MCF 10A (cell line): ENCODE measurements at regions of chr13 and their contacts with region 1.

Region 1: DNA sequence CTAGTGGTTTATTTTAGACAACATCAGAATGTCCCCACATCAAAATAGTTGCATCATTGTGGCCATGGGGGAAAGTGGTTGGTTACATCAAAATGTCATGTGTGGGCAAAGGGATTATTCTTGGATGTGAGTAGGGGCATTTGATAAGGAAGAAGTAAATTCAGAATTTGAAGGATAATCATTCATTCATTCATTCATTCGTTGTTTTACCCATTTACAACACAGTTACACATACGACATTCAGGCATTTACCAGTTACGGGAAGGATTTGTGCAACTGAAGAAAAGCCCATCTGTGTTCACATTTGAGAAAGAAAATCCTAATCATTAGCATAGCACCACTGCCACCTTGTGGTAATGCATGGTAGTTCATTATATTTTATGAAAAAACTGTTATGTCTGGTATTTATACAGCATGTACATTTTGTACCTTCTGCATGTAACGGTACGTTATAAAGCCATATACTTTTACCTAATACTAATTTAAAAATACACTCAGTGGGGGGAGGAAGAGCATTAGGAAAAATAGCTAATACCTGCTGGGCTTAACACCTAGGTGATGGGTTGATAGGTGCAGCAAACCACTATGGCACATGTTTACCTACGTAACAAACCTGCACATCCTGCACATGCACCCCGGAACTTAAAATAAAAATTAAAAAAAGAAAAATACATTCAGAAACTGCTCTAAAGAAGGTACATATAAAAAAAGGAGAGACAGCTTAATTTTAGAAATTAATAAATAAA is 62.1 kb downstream of the DGKH start:
- DNase-seq: peak; percentile 82
- H3K4me3 Mint-ChIP-seq: no peak overlapping the region
- H3K27ac Mint-ChIP-seq: peak overlapping the region; percentile 25
- H3K4me1 Mint-ChIP-seq: peaks cover 26% of the 10 kb centered on the region
- H3K27me3 Mint-ChIP-seq: no peaks in the 10 kb centered on the region
- CTCF ChIP-seq: peak; percentile 60

Region 2: DNA sequence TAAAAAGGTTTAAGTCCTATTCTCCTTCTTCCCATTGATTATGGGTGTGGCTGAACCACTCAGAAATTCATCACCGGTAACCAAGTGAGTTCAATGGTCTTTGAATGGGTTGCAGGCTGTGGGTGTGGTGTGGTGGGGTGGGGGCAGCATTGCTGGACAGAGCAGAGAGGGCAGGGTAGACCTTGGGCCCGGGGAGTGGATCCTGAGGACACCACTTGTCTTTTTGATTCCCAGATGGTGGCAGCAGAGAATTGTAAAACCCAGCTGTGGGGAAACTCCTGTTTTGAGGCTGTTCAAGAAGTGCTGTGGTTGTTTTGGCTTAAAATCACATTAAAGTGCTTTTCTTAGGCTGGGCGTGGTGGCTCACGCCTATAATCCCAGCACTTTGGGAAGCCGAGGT is 699.1 kb before region 1 on chr13:
- CTCF ChIA-PET with region 1: interaction called, 3 read pairs
- POLR2A ChIA-PET with region 1: no interaction called
- intact Hi-C with region 1: loop called (anchors 1 kb)
- DNase-seq: peak; percentile 59
- H3K4me3 Mint-ChIP-seq: no peak overlapping the region
- H3K27ac Mint-ChIP-seq: no peak overlapping the region
- H3K4me1 Mint-ChIP-seq: no peaks in the 10 kb centered on the region
- H3K27me3 Mint-ChIP-seq: no peaks in the 10 kb centered on the region
- CTCF ChIP-seq: peak; percentile 54

Region 3: DNA sequence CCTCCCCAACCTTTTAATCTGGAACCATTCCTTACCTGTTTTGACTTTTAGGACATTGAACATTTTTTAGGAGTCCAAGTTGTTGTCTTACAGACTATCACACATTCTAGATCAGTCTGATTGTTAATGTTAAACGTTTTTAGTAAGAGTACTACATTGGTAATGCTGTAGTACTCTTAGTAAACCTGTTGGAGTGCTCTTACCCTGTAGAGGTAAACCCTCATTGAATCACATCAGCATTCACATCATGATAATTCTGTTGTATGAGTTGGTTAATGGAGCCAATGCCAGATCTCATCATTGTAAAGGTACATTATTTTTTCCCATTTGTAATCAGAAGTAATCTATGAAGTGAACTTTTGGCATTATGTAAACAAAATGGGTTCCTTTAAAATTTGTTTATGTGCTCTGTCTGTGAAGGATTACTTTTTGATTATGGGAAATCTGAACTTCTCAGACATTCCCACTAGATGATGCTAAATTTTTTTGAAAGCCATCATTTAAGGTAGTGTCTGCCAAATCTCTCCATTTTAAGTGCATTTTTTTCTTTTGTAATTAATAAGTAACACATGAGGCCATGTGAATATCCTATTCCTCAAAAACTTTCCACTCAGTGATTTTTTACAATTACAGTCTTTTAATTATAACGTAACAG is 204.9 kb before region 1 on chr13:
- CTCF ChIA-PET with region 1: interaction called, 4 read pairs
- POLR2A ChIA-PET with region 1: interaction called, 3 read pairs
- intact Hi-C with region 1: loop called (anchors 1 kb)
- DNase-seq: peak; percentile 65
- H3K4me3 Mint-ChIP-seq: no peak overlapping the region
- H3K27ac Mint-ChIP-seq: peak overlapping the region; percentile 7
- H3K4me1 Mint-ChIP-seq: peaks cover 10% of the 10 kb centered on the region
- H3K27me3 Mint-ChIP-seq: no peaks in the 10 kb centered on the region
- CTCF ChIP-seq: peak; percentile 66

Region 4: GRCh38 chr13:42039946-42040729 is 70.4 kb before region 1 on chr13:
- CTCF ChIA-PET with region 1: interaction called, 5 read pairs
- POLR2A ChIA-PET with region 1: interaction called, 15 read pairs
- intact Hi-C with region 1: no loop called
- DNase-seq: peak; percentile 82
- H3K4me3 Mint-ChIP-seq: peak overlapping the region; percentile 84
- H3K27ac Mint-ChIP-seq: peak overlapping the region; percentile 84
- H3K4me1 Mint-ChIP-seq: peaks cover 6% of the 10 kb centered on the region
- H3K27me3 Mint-ChIP-seq: no peaks in the 10 kb centered on the region
- CTCF ChIP-seq: no peak

Region 5: GRCh38 chr13:42048682-42049453 is 61.7 kb before region 1 on chr13:
- CTCF ChIA-PET with region 1: interaction called, 9 read pairs
- POLR2A ChIA-PET with region 1: interaction called, 18 read pairs
- intact Hi-C with region 1: loop called (anchors 1 kb)
- DNase-seq: peak; percentile 76
- H3K4me3 Mint-ChIP-seq: peak overlapping the region; percentile 93
- H3K27ac Mint-ChIP-seq: peak overlapping the region; percentile 51
- H3K4me1 Mint-ChIP-seq: peaks cover 6% of the 10 kb centered on the region
- H3K27me3 Mint-ChIP-seq: no peaks in the 10 kb centered on the region
- CTCF ChIP-seq: peak; percentile 17

Region 6: GRCh38 chr13:42123600-42123999 is 13.0 kb after region 1 on chr13:
- CTCF ChIA-PET with region 1: interaction called, 11 read pairs
- POLR2A ChIA-PET with region 1: interaction called, 5 read pairs
- intact Hi-C with region 1: no loop called
- DNase-seq: peak; percentile 50
- H3K4me3 Mint-ChIP-seq: no peak overlapping the region
- H3K27ac Mint-ChIP-seq: no peak overlapping the region
- H3K4me1 Mint-ChIP-seq: peaks cover 5% of the 10 kb centered on the region
- H3K27me3 Mint-ChIP-seq: no peaks in the 10 kb centered on the region
- CTCF ChIP-seq: no peak

Region 7: DNA sequence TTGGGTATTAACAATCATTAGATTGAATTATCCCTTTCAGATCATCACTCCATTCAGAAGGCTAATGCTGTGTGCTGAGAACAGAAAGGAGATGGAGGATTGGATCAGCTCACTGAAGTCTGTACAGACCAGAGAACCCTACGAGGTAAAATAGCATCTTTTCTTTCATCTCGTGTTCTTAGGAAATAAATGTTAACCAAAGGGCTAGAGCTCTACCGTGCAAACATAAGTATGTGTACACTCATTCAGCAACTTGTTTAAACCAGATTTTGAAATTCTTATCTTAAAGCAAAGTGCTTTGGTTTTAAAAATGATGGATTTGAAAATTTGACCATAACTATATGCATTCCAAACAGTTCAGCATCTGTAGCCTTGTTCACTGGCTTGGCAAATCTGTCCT is 44.7 kb after region 1 on chr13:
- CTCF ChIA-PET with region 1: no interaction called
- POLR2A ChIA-PET with region 1: no interaction called
- intact Hi-C with region 1: no loop called
- DNase-seq: no peak
- H3K4me3 Mint-ChIP-seq: no peak overlapping the region
- H3K27ac Mint-ChIP-seq: no peak overlapping the region
- H3K4me1 Mint-ChIP-seq: no peaks in the 10 kb centered on the region
- H3K27me3 Mint-ChIP-seq: no peaks in the 10 kb centered on the region
- CTCF ChIP-seq: no peak

Region 8: DNA sequence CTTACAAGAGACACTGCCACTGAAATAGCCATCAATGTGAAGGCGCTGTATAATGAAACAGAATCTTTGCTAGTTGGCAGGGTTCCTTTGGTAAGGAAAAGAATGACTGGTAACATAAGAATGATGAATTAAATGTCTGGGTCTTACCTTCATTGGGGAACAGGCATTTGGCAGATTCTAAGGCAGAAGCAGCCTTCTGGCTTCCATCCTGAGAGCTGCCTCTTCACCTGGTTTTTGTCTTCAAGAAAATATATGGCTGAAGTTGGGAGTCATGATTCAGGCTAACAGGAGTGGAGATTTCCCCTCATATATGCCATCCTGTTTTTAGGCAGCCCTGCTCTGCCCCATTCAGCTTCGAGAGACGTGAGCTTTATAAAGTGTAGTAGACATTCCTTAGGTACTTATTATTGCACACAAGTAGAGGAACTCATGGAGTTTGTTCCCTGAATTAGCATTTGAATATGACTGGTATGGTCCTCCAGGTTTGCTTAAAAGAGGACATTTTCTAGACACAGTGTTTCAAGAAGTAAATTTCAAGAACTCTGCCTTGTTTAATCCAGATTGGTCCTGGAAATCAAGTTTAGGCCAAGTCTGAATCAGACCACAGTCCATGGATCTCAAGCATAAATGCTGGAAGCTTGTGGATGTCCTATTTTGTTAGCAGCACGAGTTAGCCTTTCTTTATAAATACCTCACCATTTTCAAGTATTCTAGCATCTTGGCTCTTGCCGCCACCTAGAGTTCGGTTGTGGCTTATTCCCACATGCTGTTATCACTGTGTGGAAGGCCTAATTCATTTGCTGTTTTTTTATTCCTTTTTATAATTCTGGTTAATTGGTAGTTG is 105.2 kb after region 1 on chr13:
- CTCF ChIA-PET with region 1: interaction called, 3 read pairs
- POLR2A ChIA-PET with region 1: interaction called, 3 read pairs
- intact Hi-C with region 1: loop called (anchors 5 kb)
- DNase-seq: peak; percentile 49
- H3K4me3 Mint-ChIP-seq: no peak overlapping the region
- H3K27ac Mint-ChIP-seq: no peak overlapping the region
- H3K4me1 Mint-ChIP-seq: peaks cover 24% of the 10 kb centered on the region
- H3K27me3 Mint-ChIP-seq: no peaks in the 10 kb centered on the region
- CTCF ChIP-seq: peak; percentile 47

Region 9: GRCh38 chr13:42271337-42272114 is 160.9 kb after region 1 on chr13:
- CTCF ChIA-PET with region 1: no interaction called
- POLR2A ChIA-PET with region 1: no interaction called
- intact Hi-C with region 1: no loop called
- DNase-seq: peak; percentile 97
- H3K4me3 Mint-ChIP-seq: peak overlapping the region; percentile 98
- H3K27ac Mint-ChIP-seq: peak overlapping the region; percentile 95
- H3K4me1 Mint-ChIP-seq: peaks cover 29% of the 10 kb centered on the region
- H3K27me3 Mint-ChIP-seq: no peaks in the 10 kb centered on the region
- CTCF ChIP-seq: no peak

Region 10: DNA sequence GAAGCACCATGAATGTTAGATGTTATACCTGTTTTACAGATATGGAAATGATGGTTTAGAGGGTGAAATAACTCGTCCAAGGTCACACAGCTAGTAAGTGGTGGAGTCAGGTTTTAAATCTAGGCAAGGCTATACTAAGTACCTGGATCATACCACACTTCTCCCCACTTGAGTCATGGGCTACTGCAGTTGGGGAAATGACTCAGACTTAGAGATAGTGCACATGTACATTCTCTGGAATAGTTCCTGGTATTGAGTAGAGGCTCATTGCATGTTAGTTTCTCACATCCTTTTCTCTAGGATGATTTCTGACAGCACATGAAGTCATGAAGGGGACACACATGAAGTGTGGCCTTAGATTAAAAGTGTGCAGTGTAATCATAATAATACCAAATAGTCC is 387.2 kb after region 1 on chr13:
- CTCF ChIA-PET with region 1: no interaction called
- POLR2A ChIA-PET with region 1: no interaction called
- intact Hi-C with region 1: no loop called
- DNase-seq: peak; percentile 78
- H3K4me3 Mint-ChIP-seq: no peak overlapping the region
- H3K27ac Mint-ChIP-seq: no peak overlapping the region
- H3K4me1 Mint-ChIP-seq: peaks cover 13% of the 10 kb centered on the region
- H3K27me3 Mint-ChIP-seq: no peaks in the 10 kb centered on the region
- CTCF ChIP-seq: no peak